ENCODE measurements at regions of chr19 and their contacts with region 1.

Region 1: GRCh38 chr19:6412447-6413091 is 12.0 kb downstream of the KHSRP start:
- DNase-seq: peak; percentile 78
- H3K4me3 ChIP-seq: no peak overlapping the region
- H3K27ac ChIP-seq: no peak overlapping the region
- H3K4me1 ChIP-seq: no peaks in the 10 kb centered on the region
- H3K27me3 ChIP-seq: no peaks in the 10 kb centered on the region
- CTCF ChIP-seq: peak; percentile 62
- EP300 ChIP-seq: no peak
- RAD21 ChIP-seq: peak; percentile 41

Region 2: GRCh38 chr19:6372594-6373095 is 39.9 kb before region 1 on chr19 and contains the start of gene ALKBH7:
- CTCF ChIA-PET with region 1: no interaction called
- POLR2A ChIA-PET with region 1: no interaction called
- DNase-seq: peak; percentile 90
- H3K4me3 ChIP-seq: peak within 1 kb of the TSS; percentile 82 to 96
- H3K27ac ChIP-seq: peak within 1 kb of the TSS; percentile 95 to 98
- H3K4me1 ChIP-seq: peaks cover 6 to 22% of the 10 kb centered on the region in 2 experiments; a peak in 1 of 4 replicates
- H3K27me3 ChIP-seq: no peaks in the 10 kb centered on the region
- CTCF ChIP-seq: no peak
- EP300 ChIP-seq: no peak
- RAD21 ChIP-seq: no peak
- polyA plus RNA-seq, gene ALKBH7: 37.2 and 46.0 TPM in 2 replicates

Region 3: DNA sequence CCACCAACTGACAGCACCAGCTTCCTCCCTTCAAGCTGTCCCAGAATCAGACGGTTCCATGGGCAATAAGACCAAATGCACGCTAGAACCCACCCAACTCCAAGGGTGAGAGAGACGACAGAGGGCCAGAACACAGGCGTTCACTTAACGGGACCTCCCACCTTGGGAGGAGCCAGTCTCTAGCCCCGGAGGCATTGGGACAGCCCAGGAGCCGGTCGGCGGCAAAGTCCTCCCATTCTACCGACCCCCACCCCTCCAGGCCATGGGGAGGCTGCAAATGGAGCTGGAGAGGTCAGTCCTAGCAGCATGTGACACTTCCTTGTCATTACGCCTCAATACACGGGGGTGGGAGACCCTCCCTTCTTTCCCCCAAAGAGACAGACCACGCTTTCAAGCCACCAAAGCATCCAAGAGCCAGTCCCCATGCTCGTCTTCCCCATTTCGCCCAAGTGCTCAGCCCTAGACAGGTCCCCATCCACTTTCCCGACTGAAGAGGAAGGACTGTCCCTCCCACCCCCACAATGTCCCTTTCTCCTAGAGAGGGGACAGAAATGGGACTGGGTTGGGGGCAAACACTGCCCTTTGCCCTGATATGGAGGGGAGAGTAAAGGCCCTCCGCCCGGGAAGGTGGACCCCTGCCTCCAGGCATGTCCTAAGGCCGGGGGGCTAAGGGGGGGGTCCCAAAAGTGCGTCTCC is 11.1 kb after region 1 on chr19:
- CTCF ChIA-PET with region 1: interaction called, 16 read pairs
- POLR2A ChIA-PET with region 1: no interaction called
- DNase-seq: peak; percentile 65
- H3K4me3 ChIP-seq: peak overlapping the region; percentile 83 to 88
- H3K27ac ChIP-seq: peak overlapping the region; percentile 56 to 65; a peak in 3 of 4 replicates
- H3K4me1 ChIP-seq: peaks cover 10 to 15% of the 10 kb centered on the region in 2 experiments; a peak in 2 of 4 replicates
- H3K27me3 ChIP-seq: no peaks in the 10 kb centered on the region
- CTCF ChIP-seq: no peak
- EP300 ChIP-seq: no peak
- RAD21 ChIP-seq: no peak

Measured in SK-N-SH (cell line).